Testis (tissue), 5 donors: ENCODE measurements at regions of chr19 and their contacts with region 1.

Region 1: DNA sequence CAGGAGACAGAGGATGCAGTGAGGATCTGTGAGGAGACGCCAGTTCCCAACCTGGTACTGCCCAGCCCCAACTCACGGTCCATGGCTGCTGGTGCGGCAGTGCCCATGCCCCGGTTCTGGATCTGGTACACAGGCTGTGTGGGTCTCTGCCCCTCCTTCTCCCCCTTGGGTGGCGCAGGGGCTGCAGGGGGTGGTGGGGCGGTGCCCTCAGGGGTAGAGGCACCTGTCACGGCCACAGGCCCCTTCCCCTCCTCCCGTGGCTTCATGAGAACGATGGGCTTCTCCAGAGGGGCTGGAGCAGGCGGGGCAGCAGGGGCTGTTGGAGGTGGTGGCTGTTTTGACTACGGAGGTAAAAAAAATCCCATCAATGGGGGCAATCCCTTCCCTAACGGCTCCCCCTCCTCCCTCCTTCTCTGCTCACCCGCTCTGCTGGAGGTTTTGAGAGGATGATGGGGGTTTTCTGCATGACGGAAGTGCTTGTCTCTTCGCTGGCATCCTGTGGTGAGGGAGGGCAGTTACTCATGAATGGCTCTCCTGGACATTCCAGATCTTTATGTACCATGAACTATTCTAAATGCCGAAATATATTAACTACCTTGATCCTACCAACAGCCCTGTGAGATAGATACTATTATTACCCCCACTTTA is 7.1 kb downstream of the SMG9 start:
- DNase-seq: no peak
- H3K4me3 ChIP-seq: no peak overlapping the region
- H3K27ac ChIP-seq: no peak overlapping the region
- H3K4me1 ChIP-seq: no peaks in the 10 kb centered on the region
- H3K27me3 ChIP-seq: no peaks in the 10 kb centered on the region
- CTCF ChIP-seq: no peak
- POLR2A ChIP-seq: no peak

Region 2: GRCh38 chr19:43687660-43687997 is 60.1 kb before region 1 on chr19:
- intact Hi-C with region 1: no loop called
- DNase-seq: no peak
- H3K4me3 ChIP-seq: no peak overlapping the region
- H3K27ac ChIP-seq: no peak overlapping the region
- H3K4me1 ChIP-seq: no peaks in the 10 kb centered on the region
- H3K27me3 ChIP-seq: no peaks in the 10 kb centered on the region
- CTCF ChIP-seq: no peak
- POLR2A ChIP-seq: no peak

Region 3: DNA sequence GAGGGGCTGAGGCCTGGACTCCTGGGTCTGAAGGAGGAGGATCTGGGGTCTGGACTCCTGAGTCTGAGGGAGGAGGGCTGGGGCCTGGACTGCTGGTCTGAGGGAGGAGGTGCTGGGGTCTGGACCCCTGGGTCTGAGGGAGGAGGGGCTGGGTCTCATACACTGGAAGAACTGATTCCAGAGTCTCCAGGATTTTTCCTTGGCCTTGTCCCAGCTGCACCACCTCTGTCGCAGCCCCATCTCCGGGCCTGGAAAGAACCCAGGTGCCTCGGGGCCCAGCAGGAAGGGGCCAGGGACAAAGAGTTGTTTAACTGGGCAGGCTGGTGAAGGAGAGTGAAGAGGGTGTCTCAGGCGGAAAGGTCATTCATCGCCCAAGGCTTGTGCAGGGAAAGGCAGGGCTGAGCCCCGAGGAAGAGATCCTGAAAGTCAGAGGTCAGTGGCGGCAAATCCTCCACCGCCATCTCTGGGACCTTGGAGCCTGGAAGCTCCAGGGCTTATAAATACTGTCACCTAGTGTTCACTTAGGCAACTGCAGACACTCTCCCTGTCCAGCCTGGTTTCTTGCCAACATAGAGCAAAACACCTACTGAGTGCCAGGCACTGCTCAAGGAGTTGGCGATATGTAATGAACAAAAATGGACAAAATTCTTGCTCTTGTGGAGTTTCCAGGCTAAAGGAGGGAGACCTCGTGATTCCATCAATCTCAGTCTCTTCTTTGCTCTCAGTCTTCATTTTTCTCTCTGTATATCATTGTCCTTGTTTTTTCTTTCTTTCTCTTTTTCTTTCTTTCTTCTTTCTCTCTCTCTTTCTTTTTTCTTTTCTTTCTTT is 37.5 kb after region 1 on chr19:
- intact Hi-C with region 1: loop called (anchors 5 kb)
- DNase-seq: peak; percentile 42
- H3K4me3 ChIP-seq: no peak overlapping the region
- H3K27ac ChIP-seq: no peak overlapping the region
- H3K4me1 ChIP-seq: no peaks in the 10 kb centered on the region
- H3K27me3 ChIP-seq: no peaks in the 10 kb centered on the region
- CTCF ChIP-seq: peak; percentile 54 to 91 (median 84)
- POLR2A ChIP-seq: no peak